B cell (primary cell): ENCODE measurements at regions of chr2 and their contacts with region 1.

Region 1: DNA sequence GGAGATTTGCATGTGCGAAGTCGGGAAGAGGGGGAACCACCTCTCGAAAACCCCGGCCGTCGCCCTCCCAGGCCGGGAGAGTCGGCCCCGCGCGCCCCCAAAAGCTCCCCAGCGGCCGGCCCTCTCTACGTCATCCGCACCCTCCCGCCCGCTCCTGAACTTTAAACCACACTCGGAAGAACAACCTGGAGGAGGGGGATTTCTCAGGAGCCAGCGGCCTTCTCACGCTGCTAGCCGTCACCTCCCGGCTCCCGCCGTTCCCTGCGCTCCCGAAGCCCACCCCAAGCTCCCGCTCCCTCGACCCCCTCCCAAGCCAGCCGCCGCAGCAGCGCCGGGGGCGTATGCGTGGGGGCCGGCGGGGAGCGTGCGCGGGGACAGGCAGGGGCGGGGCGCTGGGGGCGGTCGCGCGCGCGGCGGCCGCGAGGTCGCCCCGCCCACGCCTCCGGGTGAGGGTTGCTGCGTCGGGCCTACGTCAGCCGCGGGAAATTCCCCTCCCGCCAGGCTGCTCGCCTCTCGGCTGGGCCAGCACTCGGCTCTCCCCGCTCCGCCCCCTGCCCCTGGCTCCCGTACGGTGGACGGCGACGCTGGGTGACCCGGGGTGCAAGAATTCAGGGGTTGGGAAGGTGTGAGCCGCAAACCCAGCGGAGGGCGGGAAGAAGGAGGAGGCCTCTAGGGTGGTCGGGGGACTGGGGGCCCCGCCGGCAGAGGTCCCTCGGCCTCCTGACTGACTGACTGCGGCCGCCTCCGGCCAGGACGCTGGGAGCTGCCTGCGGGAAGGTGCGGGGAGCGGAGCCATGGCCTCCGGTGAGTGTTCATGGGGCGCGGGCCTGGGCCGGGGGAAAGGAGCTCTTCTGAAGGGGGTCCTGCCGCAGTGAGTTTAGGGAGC is at the start of gene REL:
- DNase-seq: peak; percentile 97
- ATAC-seq: peak; percentile 76
- H3K4me3 ChIP-seq: peak within 1 kb of the TSS; percentile 84 to 100 (median 100)
- H3K4me3 Mint-ChIP-seq: peak within 1 kb of the TSS; percentile 100
- H3K27ac ChIP-seq: peak within 1 kb of the TSS; percentile 100
- H3K27ac Mint-ChIP-seq: peak within 1 kb of the TSS; percentile 98
- H3K4me1 ChIP-seq: peaks cover 22 to 28% of the 10 kb centered on the region in 2 donors
- H3K4me1 Mint-ChIP-seq: peaks cover 36% of the 10 kb centered on the region
- H3K27me3 ChIP-seq: no peaks in the 10 kb centered on the region
- H3K27me3 Mint-ChIP-seq: no peaks in the 10 kb centered on the region
- CTCF ChIP-seq: no peak
- total RNA-seq, gene REL: 283 and 297 TPM in 2 replicates

Region 2: GRCh38 chr2:60794277-60794863 is 86.9 kb before region 1 on chr2:
- CTCF ChIA-PET with region 1: interaction called, 17 read pairs
- POLR2A ChIA-PET with region 1: interaction called, 11 read pairs
- intact Hi-C with region 1: loop called (anchors 1 kb)
- DNase-seq: peak; percentile 66
- ATAC-seq: no peak
- H3K4me3 ChIP-seq: no peak overlapping the region
- H3K4me3 Mint-ChIP-seq: no peak overlapping the region
- H3K27ac ChIP-seq: peak overlapping the region in 1 of 2 donors; percentile 23
- H3K27ac Mint-ChIP-seq: no peak overlapping the region
- H3K4me1 ChIP-seq: peaks cover 15 to 20% of the 10 kb centered on the region in 2 donors
- H3K4me1 Mint-ChIP-seq: peaks cover 28% of the 10 kb centered on the region
- H3K27me3 ChIP-seq: no peaks in the 10 kb centered on the region
- H3K27me3 Mint-ChIP-seq: no peaks in the 10 kb centered on the region
- CTCF ChIP-seq: peak; percentile 84

Region 3: GRCh38 chr2:60840880-60841279 is 40.4 kb before region 1 on chr2:
- CTCF ChIA-PET with region 1: interaction called, 63 read pairs
- POLR2A ChIA-PET with region 1: interaction called, 78 read pairs
- intact Hi-C with region 1: loop called (anchors 1 kb)
- DNase-seq: peak; percentile 86
- ATAC-seq: peak; percentile 83
- H3K4me3 ChIP-seq: peak overlapping the region in 2 of 5 experiments; percentile 23 to 25
- H3K4me3 Mint-ChIP-seq: peak overlapping the region; percentile 74
- H3K27ac ChIP-seq: peak overlapping the region; percentile 87 to 92
- H3K27ac Mint-ChIP-seq: peak overlapping the region; percentile 93
- H3K4me1 ChIP-seq: peaks cover 83 to 87% of the 10 kb centered on the region in 2 donors
- H3K4me1 Mint-ChIP-seq: peaks cover 78% of the 10 kb centered on the region
- H3K27me3 ChIP-seq: no peaks in the 10 kb centered on the region
- H3K27me3 Mint-ChIP-seq: no peaks in the 10 kb centered on the region
- CTCF ChIP-seq: no peak

Region 4: DNA sequence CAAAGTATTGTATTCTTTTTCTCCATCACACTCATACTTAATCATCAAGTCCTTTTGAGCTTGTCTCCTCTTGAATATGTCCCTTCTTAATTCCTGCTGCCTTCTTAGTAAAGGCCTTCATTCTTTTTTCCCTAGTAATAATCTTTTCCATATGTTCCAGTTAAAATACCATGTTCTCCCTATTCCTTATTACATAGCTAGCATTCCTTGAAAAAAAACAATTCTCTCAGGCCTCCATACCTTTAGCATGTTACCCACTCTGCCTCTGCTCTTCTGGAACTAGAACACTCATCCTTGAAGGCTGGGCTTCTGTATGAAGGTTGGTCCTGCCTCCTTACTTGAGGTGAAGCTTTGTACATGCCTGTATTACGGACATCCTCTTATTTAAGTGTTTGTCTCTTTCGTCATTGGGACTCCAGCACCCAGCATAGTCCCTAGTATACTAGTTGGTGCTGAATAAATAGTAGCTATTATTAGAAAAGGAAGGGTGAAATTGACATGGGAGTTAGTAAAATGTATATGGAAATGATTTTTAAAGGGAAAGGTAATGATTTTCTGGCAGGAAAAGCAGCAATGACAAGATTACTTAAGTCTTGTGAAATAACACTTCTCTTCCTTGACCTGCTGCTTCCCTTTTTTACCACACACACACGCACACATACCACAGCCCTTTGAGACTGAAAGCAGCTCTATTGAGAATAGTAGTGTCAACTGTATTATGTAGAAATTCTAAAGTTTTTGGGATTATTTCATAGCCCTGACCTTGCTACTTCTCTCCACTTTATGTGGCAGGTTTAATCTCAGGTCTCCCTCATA is 45.7 kb after region 1 on chr2:
- CTCF ChIA-PET with region 1: interaction called, 3 read pairs
- POLR2A ChIA-PET with region 1: no interaction called
- intact Hi-C with region 1: loop called (anchors 5 kb)
- DNase-seq: peak; percentile 60
- ATAC-seq: peak; percentile 39
- H3K4me3 ChIP-seq: no peak overlapping the region
- H3K4me3 Mint-ChIP-seq: peak overlapping the region; percentile 1
- H3K27ac ChIP-seq: peak overlapping the region; percentile 32 to 75
- H3K27ac Mint-ChIP-seq: peak overlapping the region; percentile 55
- H3K4me1 ChIP-seq: peaks cover 17 to 19% of the 10 kb centered on the region in 2 donors
- H3K4me1 Mint-ChIP-seq: peaks cover 30% of the 10 kb centered on the region
- H3K27me3 ChIP-seq: no peaks in the 10 kb centered on the region
- H3K27me3 Mint-ChIP-seq: no peaks in the 10 kb centered on the region
- CTCF ChIP-seq: no peak

Region 5: DNA sequence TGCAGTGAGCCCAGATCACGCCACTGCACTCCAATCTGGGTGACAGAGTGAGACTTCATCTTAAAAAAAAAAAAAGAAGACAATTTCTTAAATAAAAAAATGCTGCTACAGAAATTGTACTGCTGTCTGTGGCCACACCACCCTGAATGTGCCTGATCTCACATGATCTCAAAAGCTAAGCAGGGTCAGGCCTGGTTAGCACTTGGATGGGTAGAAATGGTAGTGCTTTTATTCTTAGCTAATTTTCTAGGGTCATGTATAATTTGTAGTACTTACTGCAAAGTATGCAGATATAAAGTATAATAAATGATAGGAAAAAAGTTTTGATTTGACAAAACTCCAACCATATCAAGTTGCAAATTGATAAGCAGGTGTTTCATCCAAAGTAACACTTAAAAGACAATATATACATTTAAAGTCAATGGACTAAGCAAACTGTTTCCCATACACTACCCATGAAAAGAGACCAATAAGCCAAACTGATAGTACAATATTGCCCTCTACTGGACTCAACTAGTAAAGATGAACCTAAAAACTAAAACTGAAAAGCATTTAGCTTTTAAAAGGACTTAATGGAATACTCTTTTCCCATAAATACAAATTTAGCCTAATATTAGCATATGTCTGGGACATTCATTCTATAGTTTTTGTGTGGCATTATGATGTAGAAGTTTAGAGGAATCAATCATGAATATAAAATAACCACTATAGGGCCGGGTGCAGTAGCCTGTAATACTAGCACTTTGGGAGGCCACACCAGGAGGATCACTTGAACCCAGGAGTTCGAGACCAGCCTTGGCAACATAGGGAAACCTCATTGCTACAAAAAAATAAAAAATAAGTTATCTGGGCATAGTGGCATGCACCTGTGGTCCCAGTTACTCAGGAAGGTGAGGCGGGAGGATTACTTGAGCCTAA is 117.6 kb after region 1 on chr2:
- CTCF ChIA-PET with region 1: interaction called, 38 read pairs
- POLR2A ChIA-PET with region 1: interaction called, 6 read pairs
- intact Hi-C with region 1: no loop called
- DNase-seq: peak; percentile 79
- ATAC-seq: peak; percentile 69
- H3K4me3 ChIP-seq: no peak overlapping the region
- H3K4me3 Mint-ChIP-seq: no peak overlapping the region
- H3K27ac ChIP-seq: no peak overlapping the region
- H3K27ac Mint-ChIP-seq: peak overlapping the region; percentile 65
- H3K4me1 ChIP-seq: peaks cover 31 to 34% of the 10 kb centered on the region in 2 donors
- H3K4me1 Mint-ChIP-seq: peaks cover 42% of the 10 kb centered on the region
- H3K27me3 ChIP-seq: no peaks in the 10 kb centered on the region
- H3K27me3 Mint-ChIP-seq: no peaks in the 10 kb centered on the region
- CTCF ChIP-seq: peak; percentile 89

Region 6: DNA sequence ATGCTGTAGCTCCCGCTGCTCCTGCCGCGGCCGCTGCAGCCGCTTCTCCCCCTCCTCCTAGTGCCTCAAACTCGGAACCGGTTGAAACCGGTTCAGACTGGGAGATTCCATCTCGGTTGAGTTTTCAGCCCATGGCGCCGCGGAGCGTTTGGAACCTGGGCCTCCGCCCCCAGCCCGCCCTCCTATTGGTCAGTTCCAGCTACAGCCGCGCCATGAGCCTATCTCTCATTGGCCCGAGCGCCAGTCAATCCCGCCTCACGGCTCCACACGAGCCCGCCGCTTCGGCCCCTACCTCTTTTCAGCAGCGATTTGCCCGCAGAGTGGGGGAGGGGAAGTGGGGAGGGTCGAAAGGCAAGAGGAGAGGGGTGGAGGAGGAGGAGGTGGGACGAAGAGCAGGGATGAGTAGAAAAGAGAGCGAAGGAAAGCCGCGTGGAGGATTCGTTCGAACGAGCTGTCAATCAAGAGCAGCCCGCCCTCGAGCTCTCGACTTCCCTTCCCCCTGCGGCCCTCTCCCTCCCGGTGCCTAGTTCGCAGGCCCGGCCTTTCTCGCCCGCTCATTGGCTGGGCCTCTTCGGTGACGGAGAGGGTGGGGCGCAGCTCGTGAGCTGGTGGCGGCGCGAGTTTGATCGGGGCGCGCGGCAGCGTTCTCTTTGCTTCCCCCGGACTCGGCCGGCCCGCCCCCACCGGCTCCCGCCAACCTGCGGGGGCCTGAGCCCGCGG is 657.1 kb after region 1 on chr2 and contains the start of gene XPO1:
- CTCF ChIA-PET with region 1: no interaction called
- POLR2A ChIA-PET with region 1: interaction called, 5 read pairs
- intact Hi-C with region 1: loop called (anchors 2 kb)
- DNase-seq: peak; percentile 100
- ATAC-seq: peak; percentile 77
- H3K4me3 ChIP-seq: peak within 1 kb of the TSS; percentile 69 to 88 (median 73)
- H3K4me3 Mint-ChIP-seq: peak within 1 kb of the TSS; percentile 99
- H3K27ac ChIP-seq: peak within 1 kb of the TSS; percentile 99 to 100
- H3K27ac Mint-ChIP-seq: peak within 1 kb of the TSS; percentile 100
- H3K4me1 ChIP-seq: peaks cover 22 to 26% of the 10 kb centered on the region in 2 donors
- H3K4me1 Mint-ChIP-seq: peaks cover 37% of the 10 kb centered on the region
- H3K27me3 ChIP-seq: no peaks in the 10 kb centered on the region
- H3K27me3 Mint-ChIP-seq: no peaks in the 10 kb centered on the region
- CTCF ChIP-seq: no peak
- total RNA-seq, gene XPO1: 208 and 219 TPM in 2 replicates